Heart left ventricle (tissue), 16 donors: ENCODE measurements at regions of chr14 and their contacts with region 1.

Region 1: GRCh38 chr14:55467307-55467706 is 26.9 kb upstream of the TBPL2 start:
- DNase-seq: no peak
- ATAC-seq: no peak
- H3K4me3 ChIP-seq: no peak overlapping the region
- H3K27ac ChIP-seq: no peak overlapping the region
- H3K4me1 ChIP-seq: no peaks in the 10 kb centered on the region
- H3K27me3 ChIP-seq: no peaks in the 10 kb centered on the region
- CTCF ChIP-seq: no peak
- POLR2A ChIP-seq: no peak

Region 2: GRCh38 chr14:55562135-55562534 is 94.8 kb after region 1 on chr14:
- intact Hi-C with region 1: loop called in 1 of 10 experiments (anchors 10 kb)
- DNase-seq: no peak
- ATAC-seq: no peak
- H3K4me3 ChIP-seq: no peak overlapping the region
- H3K27ac ChIP-seq: no peak overlapping the region
- H3K4me1 ChIP-seq: peaks cover 0 to 9% (median 0%) of the 10 kb centered on the region in 12 donors
- H3K27me3 ChIP-seq: no peaks in the 10 kb centered on the region
- CTCF ChIP-seq: no peak
- POLR2A ChIP-seq: no peak

Region 3: GRCh38 chr14:55645145-55645544 is 177.8 kb after region 1 on chr14:
- intact Hi-C with region 1: no loop called
- DNase-seq: no peak
- ATAC-seq: peak in 1 of 4 donors; percentile 15
- H3K4me3 ChIP-seq: no peak overlapping the region
- H3K27ac ChIP-seq: no peak overlapping the region
- H3K4me1 ChIP-seq: peaks cover 0 to 35% (median 10%) of the 10 kb centered on the region in 12 donors
- H3K27me3 ChIP-seq: no peaks in the 10 kb centered on the region
- CTCF ChIP-seq: no peak
- POLR2A ChIP-seq: no peak